Activated naive CD4-positive, alpha-beta T cell treated with anti-CD3 and anti-CD28 coated beads, Interleukin-2, amount 10 ng/mL, durations not matched to agents 7 days and 5 days (primary cell): ENCODE measurements at regions of chr2 and their contacts with region 1.

Region 1: DNA sequence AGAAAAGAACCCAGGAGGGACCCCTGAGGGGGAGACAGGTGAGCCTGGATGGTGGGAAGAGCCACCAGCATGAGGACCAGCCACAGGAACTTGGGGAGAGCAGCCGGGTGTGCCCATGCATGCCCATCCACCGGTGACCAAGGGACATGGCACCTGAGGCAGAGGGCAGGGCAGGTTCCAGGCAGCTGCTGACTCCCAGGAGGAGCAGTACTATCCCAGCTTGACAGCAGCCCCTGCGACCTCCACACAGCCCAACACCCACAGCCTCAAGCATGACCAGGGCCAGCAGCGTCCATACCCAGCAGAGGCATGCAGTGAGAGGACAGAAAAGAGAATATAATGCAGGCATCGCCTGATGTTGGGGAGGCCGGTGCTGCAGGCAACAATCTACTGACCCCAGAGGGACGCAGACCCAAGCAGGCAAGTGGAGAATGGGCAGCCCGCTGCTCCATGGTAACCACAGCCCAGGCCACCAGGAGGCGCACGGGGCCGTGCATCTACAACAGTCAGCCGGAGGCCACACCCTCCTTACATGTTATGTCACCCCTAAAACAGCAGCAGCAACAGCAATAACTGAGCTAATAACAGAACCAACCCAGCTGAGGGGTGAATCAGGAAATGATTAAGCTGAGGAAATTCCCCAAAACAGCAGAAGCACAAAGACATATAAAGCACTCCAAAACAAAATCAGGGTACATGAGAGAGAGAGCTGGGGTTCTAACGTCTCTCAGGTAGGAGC is 44.1 kb downstream of the ANKMY1 start:
- DNase-seq: peak; percentile 88
- H3K4me3 Mint-ChIP-seq: no peak overlapping the region
- H3K27ac Mint-ChIP-seq: no peak overlapping the region
- H3K4me1 Mint-ChIP-seq: peaks cover 13% of the 10 kb centered on the region
- H3K27me3 Mint-ChIP-seq: no peaks in the 10 kb centered on the region

Region 2: DNA sequence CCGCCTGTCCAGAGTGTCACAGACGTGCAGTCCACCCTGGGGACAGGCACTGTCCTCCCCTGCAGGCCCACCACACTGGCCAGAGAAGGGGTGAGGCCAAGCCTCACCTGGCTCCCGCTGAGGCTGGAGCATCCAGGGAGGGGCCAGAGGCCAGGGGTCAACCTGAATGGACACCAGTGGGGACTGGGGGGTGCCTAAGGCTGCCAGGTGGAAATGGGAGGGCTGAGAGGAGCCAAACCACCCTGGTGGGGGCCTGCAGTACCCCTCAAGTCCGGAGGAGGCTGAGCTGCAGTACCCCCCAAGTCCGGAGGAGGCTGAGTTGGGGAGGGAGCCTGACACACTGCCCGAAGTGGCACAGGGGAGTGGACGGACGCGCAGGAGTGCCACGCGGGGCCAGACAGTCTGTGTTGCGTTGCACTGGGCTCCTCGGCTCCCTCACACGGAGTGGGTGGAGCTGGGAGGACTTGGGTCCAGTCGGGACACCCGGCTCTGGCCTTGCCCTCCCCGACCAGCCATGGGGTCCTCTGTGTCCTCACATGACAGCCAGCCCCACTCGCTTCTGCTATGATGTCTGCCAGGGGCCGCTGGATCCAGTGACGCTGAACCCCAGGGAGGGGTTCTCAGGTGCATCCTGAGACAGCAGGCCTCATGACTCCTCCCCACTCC is 100.6 kb before region 1 on chr2:
- CTCF ChIA-PET with region 1: no interaction called
- DNase-seq: no peak
- H3K4me3 Mint-ChIP-seq: no peak overlapping the region
- H3K27ac Mint-ChIP-seq: no peak overlapping the region
- H3K4me1 Mint-ChIP-seq: no peaks in the 10 kb centered on the region
- H3K27me3 Mint-ChIP-seq: peaks cover 12% of the 10 kb centered on the region

Region 3: DNA sequence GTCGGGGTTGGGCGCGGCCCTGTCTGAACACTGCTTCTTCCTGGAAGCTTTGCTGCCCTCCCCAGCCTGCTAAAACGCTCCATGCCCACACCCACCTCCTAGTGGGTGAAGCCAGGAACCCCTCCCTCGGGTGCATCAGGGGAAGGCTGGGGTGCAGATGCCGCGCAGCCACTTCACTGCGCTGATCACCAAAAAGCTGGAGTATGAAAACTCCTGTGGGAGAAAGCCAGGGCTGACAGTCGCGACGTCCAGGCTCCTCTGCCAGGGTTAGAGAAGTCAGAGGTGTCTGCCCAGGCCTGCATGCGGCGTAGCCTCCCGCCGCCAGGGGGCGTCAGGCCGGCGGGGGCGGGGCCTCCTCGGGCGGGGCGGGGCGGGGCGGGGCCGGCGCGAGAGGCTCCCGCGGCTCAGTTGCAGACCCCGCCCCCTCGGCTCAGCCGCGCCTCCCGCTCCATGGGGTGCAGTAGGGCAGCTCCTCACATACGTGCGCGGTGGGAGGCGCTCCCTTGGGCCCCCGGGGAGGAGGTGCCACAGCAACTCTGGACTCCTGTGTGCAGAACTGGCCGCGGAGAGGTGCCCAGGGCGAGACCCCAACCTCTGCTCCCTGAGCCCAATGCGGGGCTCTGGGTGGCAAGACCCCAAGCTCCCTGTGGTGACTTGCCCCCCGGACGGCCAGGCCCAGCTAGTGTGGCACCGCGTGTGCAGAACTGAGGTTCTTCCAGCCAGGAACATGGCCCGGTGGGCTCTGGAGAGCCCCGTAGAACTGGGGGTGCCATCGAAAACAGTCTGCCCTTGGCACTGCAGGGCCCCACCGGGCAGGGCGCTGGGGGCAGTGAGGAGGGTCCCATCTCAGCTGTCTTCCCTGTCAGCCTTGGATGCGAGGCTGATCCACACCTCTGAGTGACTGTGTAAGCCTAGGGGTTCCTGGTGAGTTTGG is 52.8 kb after region 1 on chr2:
- CTCF ChIA-PET with region 1: interaction called, 20 read pairs
- DNase-seq: peak; percentile 98
- H3K4me3 Mint-ChIP-seq: peak overlapping the region; percentile 92
- H3K27ac Mint-ChIP-seq: peak overlapping the region; percentile 95
- H3K4me1 Mint-ChIP-seq: peaks cover 72% of the 10 kb centered on the region
- H3K27me3 Mint-ChIP-seq: no peaks in the 10 kb centered on the region

Region 4: DNA sequence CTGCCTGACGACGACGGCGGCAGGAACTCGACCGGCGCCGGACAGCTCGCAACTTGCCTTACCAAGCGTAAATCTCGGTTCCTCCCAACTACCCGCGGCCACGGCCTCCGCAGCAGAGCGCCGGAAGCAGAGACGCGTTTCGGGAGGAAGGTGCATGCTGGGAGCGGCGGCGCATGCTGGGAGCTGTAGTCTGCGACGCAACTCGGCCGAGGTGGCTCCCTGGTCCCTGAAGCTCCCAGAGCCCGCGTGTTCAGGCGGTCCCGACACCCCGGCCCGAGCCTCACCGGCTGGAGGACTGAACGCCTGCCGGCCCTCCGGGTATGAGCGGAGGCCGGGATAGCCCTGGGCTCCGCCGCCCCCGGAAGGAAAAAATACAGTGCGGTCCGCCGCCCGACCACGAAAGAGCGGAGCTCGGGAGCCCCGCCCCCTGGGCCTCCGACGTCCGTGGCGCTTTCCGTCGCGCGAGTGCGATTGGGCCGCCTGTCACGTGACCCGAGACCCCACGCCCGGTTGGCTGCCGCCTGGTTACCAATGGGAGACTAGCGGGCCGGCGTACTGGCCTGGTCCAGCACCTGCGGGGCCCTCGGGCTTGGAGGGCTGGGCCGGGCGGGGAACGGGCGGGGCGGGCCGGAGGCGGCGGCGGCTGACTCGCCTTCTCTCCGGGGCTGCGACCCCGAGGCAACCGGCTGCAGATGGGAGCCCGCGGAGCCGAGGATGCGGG is 72.6 kb after region 1 on chr2 and contains the start of gene CAPN10:
- CTCF ChIA-PET with region 1: interaction called, 10 read pairs
- DNase-seq: peak; percentile 98
- H3K4me3 Mint-ChIP-seq: peak within 1 kb of the TSS; percentile 96
- H3K27ac Mint-ChIP-seq: peak within 1 kb of the TSS; percentile 96
- H3K4me1 Mint-ChIP-seq: peaks cover 52% of the 10 kb centered on the region
- H3K27me3 Mint-ChIP-seq: no peaks in the 10 kb centered on the region

Region 5: DNA sequence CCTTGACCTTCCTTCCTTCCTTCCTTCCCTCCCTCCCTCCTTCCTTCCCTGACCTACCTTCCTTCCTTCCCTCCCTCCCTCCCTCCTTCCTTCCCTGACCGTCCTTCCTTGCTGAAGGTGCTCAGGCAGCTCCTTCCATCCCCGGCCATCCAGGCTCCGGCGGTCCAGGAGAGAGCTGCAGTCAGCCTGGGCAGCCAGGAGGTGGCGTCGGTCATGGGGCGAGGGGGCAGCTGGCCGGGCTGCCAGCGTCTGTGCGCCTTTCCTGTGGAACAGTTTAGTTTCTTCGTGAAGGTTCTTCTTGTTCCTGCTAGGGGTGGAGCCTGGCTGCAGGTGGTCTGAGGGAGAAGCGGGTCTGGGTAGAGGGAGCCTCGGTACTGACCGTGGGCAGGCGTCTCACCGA is 127.2 kb after region 1 on chr2:
- CTCF ChIA-PET with region 1: no interaction called
- DNase-seq: no peak
- H3K4me3 Mint-ChIP-seq: no peak overlapping the region
- H3K27ac Mint-ChIP-seq: no peak overlapping the region
- H3K4me1 Mint-ChIP-seq: peaks cover 2% of the 10 kb centered on the region
- H3K27me3 Mint-ChIP-seq: peaks cover 11% of the 10 kb centered on the region

Region 6: GRCh38 chr2:240840435-240841080 is 326.8 kb after region 1 on chr2:
- CTCF ChIA-PET with region 1: interaction called, 11 read pairs
- DNase-seq: peak; percentile 47
- H3K4me3 Mint-ChIP-seq: no peak overlapping the region
- H3K27ac Mint-ChIP-seq: no peak overlapping the region
- H3K4me1 Mint-ChIP-seq: no peaks in the 10 kb centered on the region
- H3K27me3 Mint-ChIP-seq: peaks cover 49% of the 10 kb centered on the region